ENCODE measurements at regions of chr5 and their contacts with region 1.

Region 1: DNA sequence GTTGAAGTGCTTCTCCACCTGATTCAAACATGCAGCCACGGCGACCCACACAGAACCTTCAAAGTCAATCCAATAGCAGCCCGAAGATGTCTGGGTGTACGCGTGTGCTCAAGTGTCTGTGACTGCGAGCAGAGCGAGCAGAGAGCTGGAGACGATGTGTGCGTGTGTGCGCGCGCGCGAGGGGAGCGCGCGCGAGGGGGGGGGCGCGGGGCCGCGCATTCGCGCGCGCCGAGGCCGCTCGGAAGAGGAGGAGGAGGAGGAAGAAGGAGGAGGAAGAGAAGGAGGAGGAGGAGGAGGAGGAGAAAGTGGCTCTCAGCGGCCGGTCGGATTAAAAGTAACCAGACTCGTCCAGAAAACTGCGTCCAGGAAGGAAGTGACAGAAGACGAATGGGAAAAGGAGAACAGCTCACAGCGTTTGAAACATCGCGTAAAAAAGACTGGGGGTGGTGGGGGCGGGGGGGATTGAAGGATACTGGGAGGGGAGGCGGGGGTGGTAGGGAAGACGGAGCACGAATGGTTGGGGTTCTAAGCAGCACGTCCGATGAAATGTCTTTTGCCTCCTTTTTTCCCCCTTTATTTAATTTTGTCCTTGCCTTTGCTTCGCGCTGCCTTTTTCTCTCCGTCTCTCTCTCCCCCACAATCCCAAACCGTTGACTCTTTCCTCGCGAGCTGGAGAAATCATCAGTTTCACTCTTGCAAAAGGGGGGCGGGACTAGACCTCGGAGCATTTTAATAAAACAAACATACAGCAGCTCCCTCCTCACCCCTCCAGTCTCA is at the start of gene MEF2C:
- DNase-seq: peak; percentile 67 to 71
- ATAC-seq: peak; percentile 79
- total RNA-seq, gene MEF2C: 10.0 to 27.4 TPM

Region 2: GRCh38 chr5:88826646-88827585 is 56.3 kb before region 1 on chr5:
- intact Hi-C with region 1: loop called in 1 of 2 experiments (anchors 5 kb)
- DNase-seq: peak in 1 of 2 donors; percentile 35
- ATAC-seq: peak; percentile 75